ENCODE measurements at regions of chr7 and their contacts with region 1.

Region 1: DNA sequence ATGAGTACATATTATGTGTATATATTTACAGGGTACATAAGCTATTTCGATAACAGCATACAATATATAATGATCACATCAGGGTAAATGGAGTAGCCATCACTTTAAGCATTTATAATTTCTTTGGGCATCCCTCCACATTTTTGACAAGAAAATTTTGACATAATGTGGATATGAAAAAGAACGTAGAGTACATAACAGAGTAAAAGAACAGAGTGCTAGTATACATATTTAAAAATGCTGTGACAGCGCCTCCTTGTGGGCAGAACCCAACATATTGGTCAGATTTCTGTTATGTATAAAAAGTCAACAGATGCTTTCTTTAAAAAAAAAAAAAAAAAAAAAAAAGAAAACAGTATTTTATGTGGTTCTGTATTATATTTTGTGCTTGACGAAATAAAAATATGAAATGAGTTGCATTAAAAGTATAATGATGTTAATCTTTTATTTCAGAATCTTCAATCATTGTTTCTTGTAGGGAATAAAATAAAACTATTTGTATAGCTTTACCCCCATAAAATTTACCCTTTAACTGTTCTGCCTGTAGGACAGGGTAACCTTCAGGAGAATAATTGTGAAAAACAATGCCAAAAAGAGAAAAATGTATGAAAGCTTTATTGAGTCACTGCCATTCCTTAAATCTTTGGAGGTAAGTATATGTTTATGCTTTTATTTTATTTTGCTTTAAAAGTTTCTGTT is 18.3 kb upstream of the HBP1 start:
- DNase-seq: peak; percentile 88

Region 2: DNA sequence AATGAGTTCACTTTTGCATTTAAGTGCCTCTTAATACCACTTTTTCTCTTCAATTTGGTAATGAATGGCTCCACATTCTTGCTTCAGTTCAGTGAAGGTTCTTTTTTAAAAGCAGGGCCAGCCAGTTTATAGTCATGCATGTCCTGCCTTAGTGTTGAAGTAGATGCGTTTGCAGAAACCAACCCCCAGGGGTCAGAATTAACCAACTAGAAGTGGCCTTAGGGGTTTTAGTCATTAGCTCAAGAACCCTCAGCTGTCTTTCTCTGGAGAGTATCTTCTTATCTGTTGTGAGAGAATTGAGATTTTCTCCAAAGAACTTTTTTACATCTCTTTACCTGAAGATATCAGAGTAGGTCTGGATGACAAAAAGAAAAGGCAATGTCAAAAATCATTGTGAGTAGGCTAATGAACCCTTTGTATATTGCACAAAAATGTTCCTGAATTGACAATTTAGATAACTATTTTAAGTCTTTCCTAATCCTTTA is 203.2 kb before region 1 on chr7:
- intact Hi-C with region 1: loop called in 1 of 2 experiments (anchors 10 kb)
- DNase-seq: no peak

Measured in posterior vena cava (tissue), 2 donors.